Panc1 (cell line): ENCODE measurements at regions of chr20 and their contacts with region 1.

Region 1: GRCh38 chr20:2750491-2751251 is 49.8 kb downstream of the CPXM1 start:
- DNase-seq: no peak
- ATAC-seq: peak; percentile 55
- H3K4me3 ChIP-seq: peak overlapping the region; percentile 3 to 29; a peak in 3 of 4 replicates
- H3K27ac ChIP-seq: no peak overlapping the region
- H3K4me1 ChIP-seq: peaks cover 11% of the 10 kb centered on the region
- H3K27me3 ChIP-seq: no peaks in the 10 kb centered on the region
- CTCF ChIP-seq: no peak

Region 2: GRCh38 chr20:1392823-1393506 is 1357.7 kb before region 1 on chr20 and contains the start of gene FKBP1A:
- CTCF ChIA-PET with region 1: no interaction called
- POLR2A ChIA-PET with region 1: no interaction called
- in situ Hi-C with region 1: no loop called
- intact Hi-C with region 1: no loop called
- DNase-seq: peak; percentile 75
- ATAC-seq: peak; percentile 96
- H3K4me3 ChIP-seq: peak within 1 kb of the TSS; percentile 75 to 92
- H3K27ac ChIP-seq: peak within 1 kb of the TSS; percentile 97
- H3K4me1 ChIP-seq: peaks cover 35% of the 10 kb centered on the region
- H3K27me3 ChIP-seq: no peaks in the 10 kb centered on the region
- CTCF ChIP-seq: no peak
- total RNA-seq, gene FKBP1A: 695 TPM

Region 3: GRCh38 chr20:2663887-2664719 is 86.6 kb before region 1 on chr20 and contains the start of gene IDH3B:
- CTCF ChIA-PET with region 1: interaction called, 10 read pairs
- POLR2A ChIA-PET with region 1: no interaction called
- in situ Hi-C with region 1: no loop called
- intact Hi-C with region 1: no loop called
- DNase-seq: no peak
- ATAC-seq: peak; percentile 97
- H3K4me3 ChIP-seq: peak within 1 kb of the TSS; percentile 65 to 97
- H3K27ac ChIP-seq: peak within 1 kb of the TSS; percentile 99
- H3K4me1 ChIP-seq: peaks cover 9% of the 10 kb centered on the region
- H3K27me3 ChIP-seq: no peaks in the 10 kb centered on the region
- CTCF ChIP-seq: no peak
- total RNA-seq, gene IDH3B: 135 TPM